Naive thymus-derived CD4-positive, alpha-beta T cell (primary cell): ENCODE measurements at regions of chr16 and their contacts with region 1.

Region 1: GRCh38 chr16:1351582-1352362 is at the starts of genes GNPTG and TSR3:
- DNase-seq: peak; percentile 77 to 96 (median 86)
- ATAC-seq: peak; percentile 93
- H3K4me3 ChIP-seq: peak within 1 kb of the TSS; percentile 71
- H3K4me3 Mint-ChIP-seq: peak within 1 kb of the TSS; percentile 81 to 90 (median 86)
- H3K27ac ChIP-seq: peak within 1 kb of the TSS; percentile 81
- H3K27ac Mint-ChIP-seq: peak within 1 kb of the TSS; percentile 75 to 96 (median 86)
- H3K4me1 ChIP-seq: peaks cover 13 to 21% of the 10 kb centered on the region in 2 donors
- H3K4me1 Mint-ChIP-seq: peaks cover 28 to 45% (median 34%) of the 10 kb centered on the region in 7 donors
- H3K27me3 ChIP-seq: no peaks in the 10 kb centered on the region
- H3K27me3 Mint-ChIP-seq: peaks cover 0 to 5% (median 0%) of the 10 kb centered on the region in 5 donors
- total RNA-seq, gene GNPTG: 37.9 to 57.7 (median 48.6) TPM
- total RNA-seq, gene TSR3: 21.0 to 50.4 (median 33.3) TPM

Region 2: GRCh38 chr16:527006-527753 is 824.6 kb before region 1 on chr16 and contains the start of gene CAPN15:
- CTCF ChIA-PET with region 1: no interaction called
- POLR2A ChIA-PET with region 1: no interaction called
- intact Hi-C with region 1: loop called in 1 of 2 experiments (anchors 5 kb)
- DNase-seq: peak; percentile 79 to 93 (median 89)
- ATAC-seq: peak; percentile 91
- H3K4me3 ChIP-seq: peak within 1 kb of the TSS; percentile 78
- H3K4me3 Mint-ChIP-seq: peak within 1 kb of the TSS; percentile 83 to 93 (median 88)
- H3K27ac ChIP-seq: peak within 1 kb of the TSS; percentile 97
- H3K27ac Mint-ChIP-seq: peak within 1 kb of the TSS; percentile 68 to 93 (median 83)
- H3K4me1 ChIP-seq: peaks cover 26 to 28% of the 10 kb centered on the region in 2 donors
- H3K4me1 Mint-ChIP-seq: peaks cover 21 to 38% (median 30%) of the 10 kb centered on the region in 7 donors
- H3K27me3 ChIP-seq: no peaks in the 10 kb centered on the region
- H3K27me3 Mint-ChIP-seq: no peaks in the 10 kb centered on the region
- total RNA-seq, gene CAPN15: 51.0 to 89.8 (median 55.6) TPM

Region 3: DNA sequence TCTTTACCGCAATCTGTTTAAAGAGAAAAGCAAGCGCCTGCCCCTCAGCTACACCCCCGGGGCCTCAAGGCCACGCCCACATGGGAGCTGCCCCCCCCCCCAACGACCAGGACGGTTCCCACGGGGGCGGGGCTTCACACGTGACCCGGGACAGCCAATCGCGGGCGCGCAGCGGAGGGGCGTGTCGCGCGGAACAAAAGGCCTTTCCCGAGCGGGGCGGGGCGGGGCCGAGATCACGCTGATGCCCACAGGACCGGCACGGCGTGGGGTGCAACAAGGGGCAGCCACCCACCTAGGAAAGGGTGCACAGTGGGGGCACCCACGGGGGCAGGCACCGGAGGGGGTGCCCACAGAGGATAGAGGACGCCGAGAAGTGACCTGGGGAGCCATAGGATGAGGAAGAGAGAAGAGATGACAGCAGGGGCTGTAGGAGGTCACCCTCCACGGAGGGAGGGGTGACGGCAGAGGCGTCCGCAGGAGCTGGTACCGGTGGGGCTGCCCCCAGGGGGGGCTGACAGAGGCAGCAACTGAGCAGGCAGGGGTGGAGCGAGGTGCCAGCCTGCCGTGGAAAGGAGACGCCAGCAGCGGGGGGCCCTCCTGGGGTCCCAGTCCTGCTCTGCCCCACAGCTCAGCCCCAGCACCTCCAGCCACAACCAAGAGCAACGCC is 56.5 kb after region 1 on chr16:
- CTCF ChIA-PET with region 1: no interaction called
- POLR2A ChIA-PET with region 1: interaction called, 5 read pairs
- intact Hi-C with region 1: loop called in 1 of 2 experiments (anchors 1 kb)
- DNase-seq: peak; percentile 88 to 98 (median 92)
- ATAC-seq: peak; percentile 99
- H3K4me3 ChIP-seq: peak overlapping the region; percentile 48
- H3K4me3 Mint-ChIP-seq: peak overlapping the region; percentile 57 to 85 (median 71)
- H3K27ac ChIP-seq: peak overlapping the region; percentile 59
- H3K27ac Mint-ChIP-seq: peak overlapping the region in 6 of 9 donors; percentile 13 to 78 (median 60)
- H3K4me1 ChIP-seq: peaks cover 5 to 9% of the 10 kb centered on the region in 2 donors
- H3K4me1 Mint-ChIP-seq: peaks cover 0 to 58% (median 33%) of the 10 kb centered on the region in 7 donors
- H3K27me3 ChIP-seq: no peaks in the 10 kb centered on the region
- H3K27me3 Mint-ChIP-seq: no peaks in the 10 kb centered on the region